Ascending aorta (tissue), 2 donors: ENCODE measurements at regions of chr6 and their contacts with region 1.

Region 1: DNA sequence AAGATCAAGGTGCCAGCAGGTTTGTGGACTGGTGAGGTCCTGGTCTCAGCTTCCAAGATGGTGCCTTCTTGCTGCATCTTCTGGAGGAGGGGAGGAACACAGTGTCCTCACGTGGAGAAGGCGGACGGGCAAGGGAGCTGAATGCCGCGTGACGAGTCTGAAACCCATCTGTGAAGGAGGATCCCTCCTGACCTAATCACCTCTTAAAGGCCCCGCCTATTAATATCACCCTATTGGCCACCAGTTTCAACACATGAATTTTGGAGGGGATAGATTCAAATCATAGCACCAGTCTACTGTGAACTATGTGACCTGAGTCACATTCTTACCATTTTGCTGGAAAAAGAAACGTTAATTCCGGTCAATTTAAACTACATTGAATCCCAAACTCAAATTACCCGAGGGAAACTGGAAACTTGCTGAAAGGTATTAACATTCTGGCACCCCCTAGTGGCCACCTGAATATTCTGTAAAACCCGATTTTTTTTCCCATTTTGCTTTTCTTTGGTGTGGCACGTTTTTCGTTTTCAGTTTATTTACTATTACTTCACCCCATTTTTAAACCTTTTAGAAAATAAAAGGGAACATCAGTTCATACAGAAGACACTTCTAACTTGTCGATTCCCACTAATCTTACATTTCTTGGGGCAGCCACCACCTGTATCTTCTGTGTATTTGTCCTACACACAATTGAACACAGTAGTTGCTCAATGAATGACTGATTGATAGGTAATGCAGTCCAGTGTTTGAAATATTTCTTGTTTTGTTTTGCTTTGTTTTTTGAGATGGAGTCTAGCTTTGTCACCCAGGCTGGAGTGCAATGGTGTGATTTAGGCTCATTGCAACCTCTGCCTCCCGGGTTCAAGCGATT is 17.9 kb upstream of the CCDC170 start:
- DNase-seq: no peak
- H3K4me3 ChIP-seq: peak overlapping the region in 1 of 2 donors; percentile 9
- H3K27ac ChIP-seq: no peak overlapping the region
- H3K4me1 ChIP-seq: peaks cover 0 to 3% of the 10 kb centered on the region in 2 donors
- H3K27me3 ChIP-seq: no peaks in the 10 kb centered on the region
- CTCF ChIP-seq: peak; percentile 59 to 83 (median 67)

Region 2: DNA sequence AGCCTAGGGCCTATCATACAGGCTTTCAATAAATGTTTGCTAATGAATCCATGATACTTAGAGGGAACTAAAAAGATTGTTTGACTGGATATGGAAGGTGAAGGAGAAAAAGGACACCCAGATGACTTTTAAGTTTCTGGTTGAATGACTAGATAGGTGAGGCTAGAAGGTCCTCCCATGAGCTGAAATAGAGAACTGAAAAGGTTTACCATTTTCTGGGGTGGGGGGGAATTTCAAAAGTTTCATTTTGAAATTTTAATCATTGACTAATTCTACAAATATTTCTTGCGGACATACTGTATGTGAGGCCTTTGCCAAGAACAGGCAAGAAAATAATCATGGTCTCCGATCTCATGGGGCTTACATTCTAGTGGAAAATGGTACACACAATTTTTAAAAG is 66.6 kb before region 1 on chr6:
- intact Hi-C with region 1: loop called (anchors 1 kb)
- DNase-seq: no peak
- H3K4me3 ChIP-seq: no peak overlapping the region
- H3K27ac ChIP-seq: no peak overlapping the region
- H3K4me1 ChIP-seq: peaks cover 0 to 6% of the 10 kb centered on the region in 2 donors
- H3K27me3 ChIP-seq: no peaks in the 10 kb centered on the region
- CTCF ChIP-seq: no peak

Region 3: GRCh38 chr6:151436802-151437201 is 39.1 kb before region 1 on chr6:
- intact Hi-C with region 1: loop called (anchors 1 kb)
- DNase-seq: no peak
- H3K4me3 ChIP-seq: no peak overlapping the region
- H3K27ac ChIP-seq: peak overlapping the region; percentile 66 to 72
- H3K4me1 ChIP-seq: peaks cover 8 to 29% of the 10 kb centered on the region in 2 donors
- H3K27me3 ChIP-seq: no peaks in the 10 kb centered on the region
- CTCF ChIP-seq: no peak